ENCODE measurements at regions of chr7 and their contacts with region 1.

Region 1: GRCh38 chr7:88566173-88566729 is 193.2 kb upstream of the ZNF804B start:
- DNase-seq: no peak
- ATAC-seq: no peak
- H3K4me3 ChIP-seq: no peak overlapping the region
- H3K4me3 Mint-ChIP-seq: no peak overlapping the region
- H3K27ac ChIP-seq: no peak overlapping the region
- H3K27ac Mint-ChIP-seq: no peak overlapping the region
- H3K4me1 ChIP-seq: no peaks in the 10 kb centered on the region
- H3K4me1 Mint-ChIP-seq: no peaks in the 10 kb centered on the region
- H3K27me3 ChIP-seq: no peaks in the 10 kb centered on the region
- H3K27me3 Mint-ChIP-seq: no peaks in the 10 kb centered on the region
- CTCF ChIP-seq: no peak

Region 2: GRCh38 chr7:88504787-88505186 is 61.5 kb before region 1 on chr7:
- CTCF ChIA-PET with region 1: no interaction called
- POLR2A ChIA-PET with region 1: no interaction called
- intact Hi-C with region 1: loop called in 1 of 2 experiments (anchors 2 kb)
- DNase-seq: no peak
- ATAC-seq: no peak
- H3K4me3 ChIP-seq: no peak overlapping the region
- H3K4me3 Mint-ChIP-seq: no peak overlapping the region
- H3K27ac ChIP-seq: no peak overlapping the region
- H3K27ac Mint-ChIP-seq: no peak overlapping the region
- H3K4me1 ChIP-seq: no peaks in the 10 kb centered on the region
- H3K4me1 Mint-ChIP-seq: no peaks in the 10 kb centered on the region
- H3K27me3 ChIP-seq: no peaks in the 10 kb centered on the region
- H3K27me3 Mint-ChIP-seq: no peaks in the 10 kb centered on the region
- CTCF ChIP-seq: no peak